HepG2 (cell line): ENCODE measurements at regions of chr2 and their contacts with region 1.

Region 1: DNA sequence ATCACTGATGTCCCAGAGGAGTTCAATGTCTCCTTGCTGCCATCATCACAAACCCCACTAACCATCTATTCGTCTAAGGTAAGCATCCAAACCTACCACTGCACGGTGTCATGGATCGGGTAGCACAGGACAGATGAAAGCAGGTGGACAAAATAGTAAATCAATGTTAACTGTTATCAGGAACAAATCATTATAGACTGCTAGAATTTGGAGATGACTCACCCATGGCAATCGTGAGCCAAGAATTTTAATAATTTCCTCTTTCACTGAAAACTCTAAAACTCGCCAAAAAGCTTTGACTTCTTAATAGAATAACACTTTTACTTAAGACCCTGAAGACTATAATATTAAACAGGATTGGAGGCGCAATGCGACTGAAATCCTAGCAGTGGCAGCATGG is 33.7 kb upstream of the BZW1 start:
- DNase-seq: no peak
- ATAC-seq: no peak
- H3K4me3 ChIP-seq: no peak overlapping the region
- H3K27ac ChIP-seq: no peak overlapping the region
- H3K4me1 ChIP-seq: peaks cover 30% of the 10 kb centered on the region
- H3K27me3 ChIP-seq: no peaks in the 10 kb centered on the region; a peak in 2 of 5 replicates
- CTCF ChIP-seq: no peak
- EP300 ChIP-seq: no peak
- POLR2A ChIP-seq: no peak
- RAD21 ChIP-seq: no peak

Region 2: DNA sequence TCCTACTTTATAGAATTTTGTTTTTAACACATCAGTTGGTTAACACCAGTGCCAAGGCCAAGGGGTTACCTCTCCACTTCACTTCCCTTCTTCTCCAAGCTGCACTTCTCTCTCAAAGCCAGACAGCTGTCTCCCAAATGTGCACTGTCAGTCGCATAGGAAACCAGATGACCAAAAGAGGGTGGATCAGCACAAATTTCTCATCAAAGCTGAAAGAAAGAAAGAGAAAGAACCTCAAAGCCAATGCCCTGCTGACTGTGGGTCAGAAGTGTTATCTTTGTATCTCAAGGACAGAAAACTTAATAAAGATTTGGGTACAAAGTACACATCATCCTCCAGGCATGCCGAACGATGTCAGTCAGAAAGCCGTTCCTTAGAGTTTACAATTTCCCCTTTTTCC is 439.3 kb before region 1 on chr2:
- CTCF ChIA-PET with region 1: no interaction called
- POLR2A ChIA-PET with region 1: no interaction called
- in situ Hi-C with region 1: no loop called
- intact Hi-C with region 1: no loop called
- DNase-seq: peak; percentile 30
- ATAC-seq: no peak
- H3K4me3 ChIP-seq: no peak overlapping the region
- H3K27ac ChIP-seq: peak overlapping the region; percentile 29
- H3K4me1 ChIP-seq: peaks cover 62% of the 10 kb centered on the region
- H3K27me3 ChIP-seq: no peaks in the 10 kb centered on the region
- CTCF ChIP-seq: no peak
- EP300 ChIP-seq: no peak
- POLR2A ChIP-seq: no peak
- RAD21 ChIP-seq: no peak

Region 3: DNA sequence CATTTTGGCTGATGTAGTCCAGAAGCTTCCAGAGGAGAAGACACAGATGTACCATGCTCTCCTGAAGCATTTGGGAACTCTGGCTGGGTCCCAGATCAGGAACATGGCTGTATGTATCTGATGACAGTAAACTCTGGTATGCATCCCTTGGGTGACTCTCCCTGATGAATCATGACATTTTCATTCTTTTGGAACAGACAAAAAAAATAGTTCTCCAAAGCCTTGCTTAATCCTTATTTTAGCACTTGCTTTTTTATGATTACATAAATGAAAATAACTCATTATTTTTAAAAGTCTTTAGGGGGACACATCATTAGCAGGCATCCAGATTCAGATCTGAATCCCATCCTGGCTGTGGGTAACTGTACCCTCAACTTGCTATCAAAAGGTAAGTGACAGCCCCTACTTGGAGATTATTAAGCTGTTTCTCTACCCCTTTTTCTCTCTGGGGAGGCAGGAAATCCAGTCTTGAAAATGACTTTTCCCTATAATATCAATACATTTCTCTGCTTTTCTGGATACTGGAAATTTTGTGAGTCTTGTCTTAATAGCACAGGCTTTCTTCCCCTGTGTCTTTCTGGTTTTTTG is 168.9 kb before region 1 on chr2:
- CTCF ChIA-PET with region 1: no interaction called
- POLR2A ChIA-PET with region 1: no interaction called
- in situ Hi-C with region 1: no loop called
- intact Hi-C with region 1: no loop called
- DNase-seq: no peak
- ATAC-seq: no peak; the same call in 2 of the 3 replicates
- H3K4me3 ChIP-seq: no peak overlapping the region
- H3K27ac ChIP-seq: no peak overlapping the region
- H3K4me1 ChIP-seq: peaks cover 9% of the 10 kb centered on the region
- H3K27me3 ChIP-seq: no peaks in the 10 kb centered on the region
- CTCF ChIP-seq: no peak
- EP300 ChIP-seq: no peak
- POLR2A ChIP-seq: no peak
- RAD21 ChIP-seq: no peak

Region 4: GRCh38 chr2:200756618-200757321 is 21.3 kb before region 1 on chr2:
- CTCF ChIA-PET with region 1: no interaction called
- POLR2A ChIA-PET with region 1: interaction called, 16 read pairs
- in situ Hi-C with region 1: no loop called
- intact Hi-C with region 1: no loop called
- DNase-seq: peak; percentile 95
- ATAC-seq: peak; percentile 93
- H3K4me3 ChIP-seq: peak overlapping the region; percentile 5 to 59 (median 11); a peak in 5 of 6 replicates
- H3K27ac ChIP-seq: peak overlapping the region; percentile 64
- H3K4me1 ChIP-seq: peaks cover 79% of the 10 kb centered on the region
- H3K27me3 ChIP-seq: no peaks in the 10 kb centered on the region; a peak in 2 of 5 replicates
- CTCF ChIP-seq: no peak
- EP300 ChIP-seq: peak; percentile 33 to 91; a peak in 2 of 4 replicates
- POLR2A ChIP-seq: peak; percentile 37 to 50; a peak in 2 of 4 replicates
- RAD21 ChIP-seq: peak; percentile 22; the same call in 1 of the 2 replicates

Region 5: GRCh38 chr2:200765139-200765951 is 12.7 kb before region 1 on chr2:
- CTCF ChIA-PET with region 1: no interaction called
- POLR2A ChIA-PET with region 1: interaction called, 14 read pairs
- in situ Hi-C with region 1: no loop called
- intact Hi-C with region 1: loop called (anchors 2 kb)
- DNase-seq: peak; percentile 34
- ATAC-seq: peak; percentile 42; the same call in 2 of the 3 replicates
- H3K4me3 ChIP-seq: no peak overlapping the region
- H3K27ac ChIP-seq: no peak overlapping the region
- H3K4me1 ChIP-seq: peaks cover 30% of the 10 kb centered on the region
- H3K27me3 ChIP-seq: peaks cover 3 to 17% of the 10 kb centered on the region in 2 experiments; a peak in 3 of 5 replicates
- CTCF ChIP-seq: no peak
- EP300 ChIP-seq: no peak
- POLR2A ChIP-seq: no peak
- RAD21 ChIP-seq: no peak